ENCODE measurements at regions of chr4 and their contacts with region 1.

Region 1: DNA sequence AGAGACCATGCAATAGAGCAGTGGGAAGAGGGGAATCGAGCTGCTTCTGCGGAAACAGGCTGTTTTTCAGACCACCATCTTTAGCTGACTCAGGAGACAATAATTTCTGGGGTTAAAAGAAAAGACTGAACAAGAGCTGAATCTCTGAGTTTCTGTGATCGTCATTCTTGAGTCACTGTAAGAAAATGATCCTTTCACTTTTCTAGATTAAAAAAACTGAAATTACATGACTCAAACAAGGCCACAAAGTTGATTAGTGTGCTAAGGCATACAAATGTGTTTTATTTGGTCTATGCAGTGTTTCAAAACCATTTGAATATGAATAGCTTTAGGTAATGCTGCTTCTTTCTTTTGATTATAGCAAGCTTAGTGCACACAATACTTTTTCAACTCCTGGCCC is 194.4 kb upstream of the RPL34 start:
- DNase-seq: peak; percentile 13
- ATAC-seq: peak; percentile 86
- H3K4me3 Mint-ChIP-seq: no peak overlapping the region
- H3K27ac Mint-ChIP-seq: peak overlapping the region; percentile 38
- H3K4me1 Mint-ChIP-seq: peaks cover 33% of the 10 kb centered on the region
- H3K27me3 Mint-ChIP-seq: peaks cover 3% of the 10 kb centered on the region

Region 2: GRCh38 chr4:108036213-108036612 is 389.8 kb before region 1 on chr4:
- CTCF ChIA-PET with region 1: interaction called, 5 read pairs
- POLR2A ChIA-PET with region 1: interaction called, 3 read pairs
- intact Hi-C with region 1: loop called in 1 of 2 experiments (anchors 2 kb)
- DNase-seq: peak; percentile 86
- ATAC-seq: peak; percentile 74
- H3K4me3 Mint-ChIP-seq: peak overlapping the region; percentile 59
- H3K27ac Mint-ChIP-seq: peak overlapping the region; percentile 94
- H3K4me1 Mint-ChIP-seq: peaks cover 65% of the 10 kb centered on the region
- H3K27me3 Mint-ChIP-seq: no peaks in the 10 kb centered on the region

Region 3: DNA sequence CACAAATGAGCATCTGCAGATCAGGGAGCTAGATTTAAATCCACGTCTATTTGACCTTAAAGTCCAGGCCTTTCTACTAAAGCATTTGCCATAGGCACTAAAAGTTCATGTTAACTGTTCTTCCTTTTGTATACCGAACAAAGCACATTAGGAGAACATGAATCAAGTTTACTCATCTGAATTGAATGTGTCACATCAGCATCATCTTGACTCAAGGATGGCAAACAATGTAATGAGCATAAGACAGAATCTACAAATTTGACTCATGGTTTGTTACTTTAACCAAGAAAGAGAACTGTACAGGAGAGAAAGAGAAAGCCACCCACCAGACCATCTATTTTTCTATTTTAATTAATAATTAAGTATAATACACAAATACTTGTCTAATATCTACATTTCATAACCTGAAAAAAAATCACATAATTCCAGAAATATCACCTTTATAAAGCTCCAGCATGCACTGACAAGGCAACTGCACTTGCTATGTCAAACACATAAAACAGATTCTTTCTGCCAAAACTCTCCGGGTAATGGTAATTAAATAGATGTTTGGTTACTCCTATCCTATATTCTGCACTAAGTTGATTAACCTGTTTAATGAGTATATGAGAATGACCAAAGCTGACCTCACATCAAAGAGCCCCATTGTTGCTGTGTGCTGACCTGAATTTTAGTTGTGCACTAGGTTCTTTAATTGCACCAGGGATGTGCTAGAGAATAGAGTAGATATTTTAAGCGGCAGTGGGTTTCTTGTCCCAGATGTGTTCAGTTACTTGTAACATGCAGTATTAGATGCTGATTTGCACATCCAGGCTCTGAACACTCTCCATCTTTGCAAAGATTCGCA is 214.8 kb before region 1 on chr4:
- CTCF ChIA-PET with region 1: no interaction called
- POLR2A ChIA-PET with region 1: no interaction called
- intact Hi-C with region 1: loop called in 1 of 2 experiments (anchors 5 kb)
- DNase-seq: no peak
- ATAC-seq: peak; percentile 94
- H3K4me3 Mint-ChIP-seq: no peak overlapping the region
- H3K27ac Mint-ChIP-seq: peak overlapping the region; percentile 40
- H3K4me1 Mint-ChIP-seq: peaks cover 38% of the 10 kb centered on the region
- H3K27me3 Mint-ChIP-seq: no peaks in the 10 kb centered on the region

Region 4: DNA sequence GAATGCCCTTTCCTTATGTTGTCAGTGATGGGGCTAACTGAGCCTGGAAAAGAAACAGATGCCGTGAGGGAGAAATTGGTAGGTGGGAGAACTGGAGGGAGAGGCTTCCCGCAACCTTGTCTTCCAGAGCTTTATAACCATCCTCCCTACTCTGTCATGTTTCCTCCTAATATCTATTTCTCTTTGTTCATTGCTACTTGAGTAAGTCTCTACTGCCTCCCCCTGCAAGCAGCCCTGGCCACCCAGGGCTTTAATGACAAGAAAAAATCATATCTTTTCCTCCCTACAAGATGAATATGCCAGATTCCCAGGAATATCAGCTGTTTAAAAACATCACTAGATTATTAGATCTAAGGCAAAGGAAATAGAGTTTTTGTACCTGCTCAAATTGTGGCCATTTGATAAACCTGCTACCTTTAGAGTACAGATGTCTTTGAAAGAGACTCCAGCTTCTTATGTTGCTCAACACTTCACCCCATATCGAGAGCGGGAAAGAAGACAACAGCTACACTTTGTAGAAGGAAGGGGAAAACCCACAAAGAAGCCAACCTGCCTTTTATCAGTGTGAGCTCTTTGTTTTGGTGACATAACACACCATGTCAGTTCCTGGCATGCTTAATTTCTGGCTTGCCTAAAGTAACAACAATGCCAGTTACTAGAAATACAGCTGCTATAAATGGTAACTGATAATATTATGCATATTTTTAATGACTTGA is 70.6 kb before region 1 on chr4:
- CTCF ChIA-PET with region 1: no interaction called
- POLR2A ChIA-PET with region 1: no interaction called
- intact Hi-C with region 1: loop called (anchors 2 to 5 kb)
- DNase-seq: peak; percentile 42
- ATAC-seq: peak; percentile 82
- H3K4me3 Mint-ChIP-seq: peak overlapping the region; percentile 10
- H3K27ac Mint-ChIP-seq: peak overlapping the region; percentile 79
- H3K4me1 Mint-ChIP-seq: peaks cover 53% of the 10 kb centered on the region
- H3K27me3 Mint-ChIP-seq: no peaks in the 10 kb centered on the region

Region 5: GRCh38 chr4:108483079-108483478 is 57.1 kb after region 1 on chr4:
- CTCF ChIA-PET with region 1: no interaction called
- POLR2A ChIA-PET with region 1: no interaction called
- intact Hi-C with region 1: loop called in 1 of 2 experiments (anchors 5 kb)
- DNase-seq: peak; percentile 58
- ATAC-seq: peak; percentile 68
- H3K4me3 Mint-ChIP-seq: no peak overlapping the region
- H3K27ac Mint-ChIP-seq: no peak overlapping the region
- H3K4me1 Mint-ChIP-seq: peaks cover 34% of the 10 kb centered on the region
- H3K27me3 Mint-ChIP-seq: no peaks in the 10 kb centered on the region

Region 6: DNA sequence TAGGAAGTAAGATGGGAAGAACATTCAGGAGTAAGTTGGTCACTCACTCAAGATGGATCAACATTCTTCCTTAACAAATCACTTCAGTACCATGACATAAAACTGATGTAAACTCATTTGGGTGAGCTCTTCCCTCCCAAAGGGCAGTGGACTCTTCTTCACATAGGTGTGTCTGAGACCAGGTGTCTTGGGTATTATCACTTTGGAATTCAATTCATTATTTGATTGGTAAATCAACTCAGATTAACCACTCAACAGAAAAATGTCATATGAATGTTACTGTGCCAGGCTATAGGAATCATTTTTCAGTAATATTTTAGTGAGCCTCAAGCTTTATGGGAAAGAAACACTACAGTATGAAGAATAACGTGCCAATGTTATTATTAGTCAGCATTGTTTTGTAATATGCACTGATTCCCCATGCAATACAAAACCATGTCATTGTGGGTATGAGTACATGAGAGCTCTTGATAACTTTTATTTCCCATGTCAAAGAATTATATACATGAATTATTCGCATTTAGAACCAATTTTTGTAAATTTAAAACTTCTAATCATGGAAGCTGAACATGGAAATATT is 395.5 kb after region 1 on chr4:
- CTCF ChIA-PET with region 1: no interaction called
- POLR2A ChIA-PET with region 1: no interaction called
- intact Hi-C with region 1: no loop called
- DNase-seq: no peak
- ATAC-seq: no peak
- H3K4me3 Mint-ChIP-seq: no peak overlapping the region
- H3K27ac Mint-ChIP-seq: no peak overlapping the region
- H3K4me1 Mint-ChIP-seq: no peaks in the 10 kb centered on the region
- H3K27me3 Mint-ChIP-seq: peaks cover 3% of the 10 kb centered on the region

Measured in activated CD4-positive, alpha-beta T cell treated with anti-CD3 and anti-CD28 coated beads for 36 hours (primary cell).